Activated CD4-positive, alpha-beta T cell treated with anti-CD3 and anti-CD28 coated beads for 36 hours (primary cell): ENCODE measurements at regions of chr5 and their contacts with region 1.

Region 1: DNA sequence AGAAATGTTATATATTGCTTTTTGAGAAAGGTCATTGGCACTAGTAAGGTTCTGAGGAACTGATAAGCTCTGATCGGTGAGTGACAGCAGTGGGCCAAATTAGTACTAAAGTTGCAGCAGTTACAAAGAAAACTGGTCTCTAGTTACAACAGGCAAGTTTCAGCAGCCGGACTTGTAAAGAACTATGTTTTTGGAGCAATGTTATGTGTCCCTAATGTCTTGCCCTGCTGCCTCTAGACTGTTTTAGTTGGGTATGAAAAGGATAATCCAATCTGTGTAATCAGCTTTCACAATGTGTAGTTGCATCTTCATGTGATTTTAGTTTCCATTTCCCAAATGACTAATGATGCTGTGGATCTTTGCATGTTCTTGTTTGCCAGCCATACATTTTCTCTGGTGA is 113.5 kb downstream of the CAMK4 start:
- DNase-seq: no peak
- ATAC-seq: peak; percentile 88
- H3K4me3 Mint-ChIP-seq: peak overlapping the region; percentile 20
- H3K27ac Mint-ChIP-seq: peak overlapping the region; percentile 87
- H3K4me1 Mint-ChIP-seq: peaks cover 77% of the 10 kb centered on the region
- H3K27me3 Mint-ChIP-seq: no peaks in the 10 kb centered on the region

Region 2: GRCh38 chr5:111237470-111237869 is 100.2 kb before region 1 on chr5:
- CTCF ChIA-PET with region 1: no interaction called
- POLR2A ChIA-PET with region 1: no interaction called
- intact Hi-C with region 1: loop called in 1 of 2 experiments (anchors 2 kb)
- DNase-seq: no peak
- ATAC-seq: peak; percentile 35
- H3K4me3 Mint-ChIP-seq: peak overlapping the region; percentile 63
- H3K27ac Mint-ChIP-seq: peak overlapping the region; percentile 93
- H3K4me1 Mint-ChIP-seq: peaks cover 94% of the 10 kb centered on the region
- H3K27me3 Mint-ChIP-seq: no peaks in the 10 kb centered on the region

Region 3: GRCh38 chr5:111299831-111300432 is 37.8 kb before region 1 on chr5:
- CTCF ChIA-PET with region 1: interaction called, 8 read pairs
- POLR2A ChIA-PET with region 1: no interaction called
- intact Hi-C with region 1: loop called in 1 of 2 experiments (anchors 5 kb)
- DNase-seq: no peak
- ATAC-seq: peak; percentile 90
- H3K4me3 Mint-ChIP-seq: peak overlapping the region; percentile 54
- H3K27ac Mint-ChIP-seq: peak overlapping the region; percentile 94
- H3K4me1 Mint-ChIP-seq: peaks cover 45% of the 10 kb centered on the region
- H3K27me3 Mint-ChIP-seq: no peaks in the 10 kb centered on the region

Region 4: DNA sequence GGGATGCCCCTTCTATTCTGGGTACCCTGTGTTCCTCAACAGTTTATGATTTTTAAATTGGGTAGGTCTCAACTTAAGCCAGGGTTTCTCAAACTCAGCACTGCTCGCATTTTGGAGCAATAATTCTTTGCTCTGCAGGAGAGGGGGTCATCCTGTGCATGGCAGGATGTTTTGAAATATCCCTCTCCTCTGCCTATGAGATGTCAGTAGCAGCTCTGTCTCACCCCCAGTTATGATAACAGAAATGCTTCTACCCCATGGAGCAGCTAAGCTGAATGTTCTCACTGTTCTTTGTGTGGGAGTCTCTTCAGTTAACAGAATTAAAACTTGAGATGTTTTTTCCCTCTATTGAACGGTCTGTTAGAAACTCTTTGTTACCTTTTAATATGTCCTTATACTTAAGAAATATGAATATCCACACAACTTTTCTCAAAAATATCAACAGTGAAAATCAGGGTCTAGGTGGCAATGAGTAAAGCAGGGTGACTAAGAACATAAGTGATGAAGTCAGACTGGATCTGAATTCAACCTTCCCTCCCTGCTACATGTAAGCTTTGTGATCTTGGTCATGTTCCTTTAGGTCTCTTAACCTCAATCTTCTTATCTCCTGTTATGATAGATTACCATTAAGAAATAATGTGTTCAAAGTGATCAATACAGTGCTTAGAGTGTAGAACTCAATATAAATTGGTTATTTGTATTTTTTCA is 24.5 kb before region 1 on chr5:
- CTCF ChIA-PET with region 1: interaction called, 6 read pairs
- POLR2A ChIA-PET with region 1: interaction called, 4 read pairs
- intact Hi-C with region 1: loop called (anchors 1 kb)
- DNase-seq: peak; percentile 26
- ATAC-seq: peak; percentile 89
- H3K4me3 Mint-ChIP-seq: no peak overlapping the region
- H3K27ac Mint-ChIP-seq: peak overlapping the region; percentile 70
- H3K4me1 Mint-ChIP-seq: peaks cover 84% of the 10 kb centered on the region
- H3K27me3 Mint-ChIP-seq: no peaks in the 10 kb centered on the region